ENCODE measurements at regions of chr1 and their contacts with region 1.

Region 1: DNA sequence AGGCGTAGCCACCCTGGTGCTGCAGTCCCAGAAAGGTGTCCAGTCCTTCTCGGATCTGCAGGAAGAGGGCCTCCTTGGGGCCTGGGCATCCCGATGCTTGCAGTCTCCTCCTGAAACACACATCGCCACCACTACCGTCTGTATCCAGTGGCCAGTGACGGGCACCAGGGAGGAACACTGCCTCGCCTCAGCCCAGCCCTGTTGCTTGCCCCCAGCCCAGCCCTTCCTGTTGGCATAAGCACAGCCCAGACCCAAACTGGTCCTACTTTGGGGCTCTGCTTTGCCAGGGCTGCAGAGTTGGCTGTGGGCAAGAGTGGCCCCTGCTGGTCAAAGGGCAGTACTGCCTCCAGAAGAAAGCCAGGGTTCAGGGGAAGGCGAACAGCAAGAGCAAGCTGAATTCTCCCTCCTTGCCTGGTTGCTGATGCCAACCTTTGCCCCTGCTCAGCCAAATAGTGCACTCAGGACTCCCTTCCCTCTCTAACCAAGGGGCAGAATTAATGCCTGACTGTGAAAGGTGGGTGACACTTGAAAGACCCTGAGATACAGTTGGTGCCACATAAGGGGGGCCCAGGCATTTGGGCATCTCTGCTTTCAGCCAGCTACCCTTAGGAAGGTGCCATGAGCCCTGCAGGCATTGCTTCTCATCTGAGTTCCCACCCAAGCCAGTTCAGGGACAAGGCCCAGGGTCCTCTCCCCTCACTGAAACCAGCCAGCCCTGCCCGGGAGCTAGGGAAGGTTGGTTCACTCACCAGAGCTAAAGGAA is 11.1 kb upstream of the ARHGEF2 start:
- DNase-seq: peak; percentile 76
- H3K4me3 ChIP-seq: no peak overlapping the region
- H3K27ac ChIP-seq: no peak overlapping the region
- H3K4me1 ChIP-seq: peaks cover 6% of the 10 kb centered on the region
- H3K27me3 ChIP-seq: no peaks in the 10 kb centered on the region
- CTCF ChIP-seq: peak; percentile 95 to 98
- POLR2A ChIP-seq: no peak

Region 2: DNA sequence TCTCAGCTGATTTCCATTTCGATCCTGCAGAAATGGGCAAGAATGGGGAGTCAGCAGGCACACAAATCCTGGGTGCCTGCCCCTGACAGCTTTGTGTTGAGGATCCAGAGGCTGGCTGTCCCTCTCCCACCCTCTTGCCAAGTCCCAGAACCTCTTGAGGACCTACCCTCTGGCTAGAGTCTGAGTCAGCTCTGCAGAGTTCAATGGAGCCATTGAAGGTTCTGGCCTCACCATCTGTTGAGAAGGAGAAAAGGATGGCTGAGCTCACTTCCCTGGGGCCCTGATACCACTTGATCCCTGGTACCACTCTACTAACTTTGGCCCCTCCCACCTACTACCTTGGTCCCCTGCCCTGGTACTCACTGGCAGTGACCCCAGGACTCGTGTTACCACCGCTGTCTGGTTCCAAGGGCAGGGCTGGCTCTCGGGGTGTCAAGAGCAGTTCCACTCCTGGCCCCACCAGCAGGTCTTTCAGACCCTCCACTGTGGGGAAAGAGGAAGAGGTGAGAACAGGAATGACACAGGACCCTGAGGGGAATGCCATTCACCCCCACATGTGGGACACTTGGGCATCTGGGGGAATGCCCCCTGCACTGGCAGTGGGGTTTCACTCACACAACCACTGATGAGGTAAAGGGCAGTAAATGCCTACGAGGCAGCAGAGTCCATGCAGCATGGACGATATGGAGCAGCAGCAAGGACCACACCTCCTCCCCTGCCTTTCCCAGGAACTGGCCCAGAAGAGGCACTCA is 37.5 kb before region 1 on chr1:
- CTCF ChIA-PET with region 1: interaction called, 27 read pairs
- POLR2A ChIA-PET with region 1: no interaction called
- dilution Hi-C with region 1: no loop called
- intact Hi-C with region 1: no loop called
- DNase-seq: no peak
- H3K4me3 ChIP-seq: no peak overlapping the region
- H3K27ac ChIP-seq: no peak overlapping the region
- H3K4me1 ChIP-seq: no peaks in the 10 kb centered on the region
- H3K27me3 ChIP-seq: no peaks in the 10 kb centered on the region
- CTCF ChIP-seq: no peak
- POLR2A ChIP-seq: no peak

Region 3: DNA sequence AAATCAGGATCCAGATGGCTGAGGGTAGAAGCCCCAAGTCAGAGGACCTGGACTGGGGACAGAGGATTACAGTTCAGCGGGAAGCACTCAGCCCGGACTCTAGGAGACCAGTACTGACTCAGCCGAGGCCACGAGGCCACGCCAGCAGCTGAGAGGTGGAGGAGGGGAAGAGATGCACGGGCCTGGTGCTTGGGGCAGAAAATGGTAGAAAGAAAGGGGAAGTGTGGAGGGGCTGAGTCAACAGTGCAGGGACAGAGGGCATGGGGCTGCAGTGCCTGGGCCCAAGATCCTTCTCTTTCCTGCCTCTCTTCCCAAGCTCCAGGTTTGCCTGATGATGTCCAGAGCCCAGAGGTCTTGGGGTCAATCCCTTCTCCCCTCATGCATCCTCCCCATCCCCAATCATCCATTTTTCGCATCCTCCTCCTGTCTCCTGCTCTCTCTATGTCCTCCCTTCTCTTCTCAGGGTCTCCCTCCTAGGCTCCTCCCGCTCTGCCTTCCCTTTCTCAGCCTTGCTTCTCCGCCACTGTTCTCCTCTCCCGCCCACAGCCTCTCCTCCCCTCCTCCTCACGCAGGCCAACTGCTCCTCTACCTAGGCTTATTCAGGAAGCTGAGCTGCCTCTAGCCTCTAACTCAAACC is 18.8 kb before region 1 on chr1:
- CTCF ChIA-PET with region 1: interaction called, 82 read pairs
- POLR2A ChIA-PET with region 1: no interaction called
- dilution Hi-C with region 1: no loop called
- intact Hi-C with region 1: loop called (anchors 1 kb)
- DNase-seq: peak; percentile 91
- H3K4me3 ChIP-seq: no peak overlapping the region
- H3K27ac ChIP-seq: peak overlapping the region; percentile 35
- H3K4me1 ChIP-seq: peaks cover 81% of the 10 kb centered on the region
- H3K27me3 ChIP-seq: no peaks in the 10 kb centered on the region
- CTCF ChIP-seq: no peak
- POLR2A ChIP-seq: peak; percentile 74

Region 4: GRCh38 chr1:156001682-156002171 is 12.3 kb after region 1 on chr1:
- CTCF ChIA-PET with region 1: interaction called, 22 read pairs
- POLR2A ChIA-PET with region 1: no interaction called
- dilution Hi-C with region 1: no loop called
- intact Hi-C with region 1: no loop called
- DNase-seq: no peak
- H3K4me3 ChIP-seq: no peak overlapping the region
- H3K27ac ChIP-seq: no peak overlapping the region
- H3K4me1 ChIP-seq: no peaks in the 10 kb centered on the region
- H3K27me3 ChIP-seq: no peaks in the 10 kb centered on the region
- CTCF ChIP-seq: no peak
- POLR2A ChIP-seq: no peak